ENCODE measurements at regions of chr1 and their contacts with region 1.

Region 1: GRCh38 chr1:29802181-29803068 is 566.1 kb downstream of the PTPRU start:
- DNase-seq: no peak
- ATAC-seq: no peak
- H3K4me3 ChIP-seq: no peak overlapping the region
- H3K27ac ChIP-seq: no peak overlapping the region
- H3K4me1 ChIP-seq: no peaks in the 10 kb centered on the region
- H3K27me3 ChIP-seq: no peaks in the 10 kb centered on the region
- CTCF ChIP-seq: no peak
- POLR2A ChIP-seq: no peak

Region 2: GRCh38 chr1:30024411-30025195 is 222.2 kb after region 1 on chr1:
- intact Hi-C with region 1: no loop called
- DNase-seq: no peak
- ATAC-seq: peak in 3 of 4 donors; percentile 30 to 52 (median 41)
- H3K4me3 ChIP-seq: no peak overlapping the region
- H3K27ac ChIP-seq: no peak overlapping the region
- H3K4me1 ChIP-seq: no peaks in the 10 kb centered on the region
- H3K27me3 ChIP-seq: no peaks in the 10 kb centered on the region
- CTCF ChIP-seq: no peak
- POLR2A ChIP-seq: no peak

Region 3: GRCh38 chr1:30697571-30698376 is 895.3 kb after region 1 on chr1:
- intact Hi-C with region 1: loop called in 1 of 2 experiments (anchors 10 kb)
- DNase-seq: peak in 1 of 3 donors; percentile 11
- ATAC-seq: no peak
- H3K4me3 ChIP-seq: no peak overlapping the region
- H3K27ac ChIP-seq: no peak overlapping the region
- H3K4me1 ChIP-seq: no peaks in the 10 kb centered on the region
- H3K27me3 ChIP-seq: no peaks in the 10 kb centered on the region
- CTCF ChIP-seq: no peak
- POLR2A ChIP-seq: no peak